ENCODE measurements at regions of chr5 and their contacts with region 1.

Region 1: GRCh38 chr5:88883059-88883835 is at the start of gene MEF2C:
- DNase-seq: peak; percentile 96
- H3K4me3 ChIP-seq: peak within 1 kb of the TSS; percentile 79 to 100 (median 100)
- H3K27ac ChIP-seq: peak within 1 kb of the TSS; percentile 95
- H3K4me1 ChIP-seq: peaks cover 31% of the 10 kb centered on the region
- H3K27me3 ChIP-seq: no peaks in the 10 kb centered on the region
- CTCF ChIP-seq: no peak
- POLR2A ChIP-seq: peak; percentile 70
- total RNA-seq, gene MEF2C: 58.3 and 67.7 TPM in 2 replicates

Region 2: GRCh38 chr5:87412630-87413342 is 1470.5 kb before region 1 on chr5 and contains the start of gene CCNH:
- CTCF ChIA-PET with region 1: no interaction called
- POLR2A ChIA-PET with region 1: no interaction called
- dilution Hi-C with region 1: no loop called
- intact Hi-C with region 1: loop called (anchors 2 kb)
- DNase-seq: peak; percentile 98
- H3K4me3 ChIP-seq: peak within 1 kb of the TSS; percentile 71 to 96 (median 94)
- H3K27ac ChIP-seq: peak within 1 kb of the TSS; percentile 97
- H3K4me1 ChIP-seq: peaks cover 18% of the 10 kb centered on the region
- H3K27me3 ChIP-seq: no peaks in the 10 kb centered on the region
- CTCF ChIP-seq: no peak
- POLR2A ChIP-seq: peak; percentile 89
- total RNA-seq, gene CCNH: 50.6 and 54.1 TPM in 2 replicates

Region 3: GRCh38 chr5:88826646-88827585 is 56.3 kb before region 1 on chr5:
- CTCF ChIA-PET with region 1: interaction called, 10 read pairs
- POLR2A ChIA-PET with region 1: interaction called, 26 read pairs
- dilution Hi-C with region 1: no loop called
- intact Hi-C with region 1: loop called (anchors 1 kb)
- DNase-seq: peak; percentile 99
- H3K4me3 ChIP-seq: peak overlapping the region in 1 of 3 experiments; percentile 37
- H3K27ac ChIP-seq: peak overlapping the region; percentile 94
- H3K4me1 ChIP-seq: peaks cover 64% of the 10 kb centered on the region
- H3K27me3 ChIP-seq: no peaks in the 10 kb centered on the region
- CTCF ChIP-seq: no peak
- POLR2A ChIP-seq: peak; percentile 73

Region 4: DNA sequence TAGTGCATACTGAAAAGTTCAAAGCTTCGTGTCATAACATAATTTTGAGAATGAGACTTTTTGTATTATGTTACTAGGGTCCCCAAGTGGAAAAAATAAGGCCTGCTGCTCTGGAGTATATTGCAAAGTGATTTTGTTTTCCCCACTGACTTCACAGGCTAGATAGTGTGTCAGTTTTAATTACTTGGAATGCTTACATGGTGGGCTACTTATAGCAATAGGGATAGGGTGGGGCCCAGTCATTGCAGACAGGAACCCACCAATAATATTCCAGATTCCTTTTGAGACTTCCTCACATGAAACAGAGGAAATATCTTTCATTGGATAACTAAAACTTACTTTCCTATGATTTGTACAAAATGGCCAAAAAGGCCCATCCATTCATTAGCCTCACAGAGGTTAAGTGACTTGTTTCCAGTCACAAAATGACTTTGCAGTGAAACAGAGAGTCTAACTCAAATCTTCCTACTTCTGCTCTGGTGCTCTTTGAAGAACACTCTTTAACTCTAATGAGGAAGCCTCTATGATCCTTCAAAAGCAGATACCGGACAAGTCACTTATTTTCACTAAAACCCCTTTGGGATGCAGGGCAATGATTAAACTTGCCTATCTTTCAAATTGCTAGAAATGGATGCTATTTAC is 16.0 kb after region 1 on chr5:
- CTCF ChIA-PET with region 1: no interaction called
- POLR2A ChIA-PET with region 1: no interaction called
- dilution Hi-C with region 1: no loop called
- intact Hi-C with region 1: no loop called
- DNase-seq: no peak
- H3K4me3 ChIP-seq: no peak overlapping the region
- H3K27ac ChIP-seq: no peak overlapping the region
- H3K4me1 ChIP-seq: no peaks in the 10 kb centered on the region
- H3K27me3 ChIP-seq: no peaks in the 10 kb centered on the region
- CTCF ChIP-seq: no peak
- POLR2A ChIP-seq: no peak

Region 5: DNA sequence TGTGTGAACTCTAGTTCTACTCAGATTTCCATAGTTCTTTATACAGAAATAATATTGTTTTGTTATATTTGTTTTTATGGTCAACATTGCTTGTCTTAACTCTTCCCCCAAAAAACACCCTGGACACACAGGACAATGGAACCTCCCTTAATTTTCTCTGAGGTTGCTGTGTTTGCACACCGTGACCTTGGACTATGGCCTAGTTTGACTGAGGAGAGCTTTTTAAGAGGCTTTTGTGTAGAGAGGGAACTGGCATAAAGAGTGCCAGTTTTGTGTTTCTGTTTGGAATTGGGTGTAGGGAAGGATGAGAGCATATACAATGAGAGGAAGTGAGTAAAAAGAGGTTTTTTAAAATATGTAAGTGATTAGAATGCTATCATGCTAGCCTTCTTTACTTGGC is 100.8 kb after region 1 on chr5:
- CTCF ChIA-PET with region 1: no interaction called
- POLR2A ChIA-PET with region 1: no interaction called
- dilution Hi-C with region 1: no loop called
- intact Hi-C with region 1: no loop called
- DNase-seq: no peak
- H3K4me3 ChIP-seq: no peak overlapping the region
- H3K27ac ChIP-seq: no peak overlapping the region
- H3K4me1 ChIP-seq: no peaks in the 10 kb centered on the region
- H3K27me3 ChIP-seq: no peaks in the 10 kb centered on the region
- CTCF ChIP-seq: no peak
- POLR2A ChIP-seq: no peak

Region 6: DNA sequence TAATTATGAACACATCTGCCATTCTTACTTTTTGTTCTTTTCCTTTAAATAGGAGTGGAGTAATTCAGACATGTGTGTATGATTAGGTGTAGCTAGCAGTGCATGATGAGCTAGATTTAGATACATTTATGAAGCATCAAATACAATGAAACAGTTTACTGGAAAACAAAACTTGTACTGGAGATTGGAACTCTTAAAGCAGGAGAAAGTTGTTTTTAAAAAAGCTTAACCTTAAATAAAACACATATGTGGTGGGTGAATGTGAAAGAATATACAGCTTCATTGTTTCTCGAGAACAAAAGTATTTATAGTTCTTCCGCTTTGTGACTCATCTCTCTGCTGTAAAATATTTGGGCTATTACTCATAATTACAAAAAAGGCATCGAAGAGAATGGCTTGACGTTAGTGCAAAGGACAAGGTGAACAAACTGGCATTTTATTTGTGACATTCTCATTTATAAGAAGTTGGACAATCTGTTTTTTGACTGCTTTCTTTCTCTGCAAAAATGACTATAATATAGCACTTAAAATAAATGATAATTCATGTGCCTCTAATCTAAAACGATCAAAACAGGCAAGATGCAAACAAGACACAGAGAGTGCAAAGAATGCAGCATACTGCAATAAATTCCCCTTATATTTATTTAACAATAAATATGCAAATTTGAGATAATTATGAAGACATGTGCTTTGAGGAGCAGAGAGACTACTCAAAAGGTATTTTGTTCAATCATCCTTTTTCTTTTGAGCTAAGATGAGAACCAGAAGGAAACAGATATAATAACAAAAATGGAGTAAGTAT is 1047.5 kb after region 1 on chr5:
- CTCF ChIA-PET with region 1: no interaction called
- POLR2A ChIA-PET with region 1: interaction called, 6 read pairs
- dilution Hi-C with region 1: no loop called
- intact Hi-C with region 1: loop called (anchors 2 kb)
- DNase-seq: peak; percentile 88
- H3K4me3 ChIP-seq: peak overlapping the region in 1 of 3 experiments; percentile 21
- H3K27ac ChIP-seq: peak overlapping the region; percentile 97
- H3K4me1 ChIP-seq: peaks cover 29% of the 10 kb centered on the region
- H3K27me3 ChIP-seq: no peaks in the 10 kb centered on the region
- CTCF ChIP-seq: no peak
- POLR2A ChIP-seq: no peak

Region 7: DNA sequence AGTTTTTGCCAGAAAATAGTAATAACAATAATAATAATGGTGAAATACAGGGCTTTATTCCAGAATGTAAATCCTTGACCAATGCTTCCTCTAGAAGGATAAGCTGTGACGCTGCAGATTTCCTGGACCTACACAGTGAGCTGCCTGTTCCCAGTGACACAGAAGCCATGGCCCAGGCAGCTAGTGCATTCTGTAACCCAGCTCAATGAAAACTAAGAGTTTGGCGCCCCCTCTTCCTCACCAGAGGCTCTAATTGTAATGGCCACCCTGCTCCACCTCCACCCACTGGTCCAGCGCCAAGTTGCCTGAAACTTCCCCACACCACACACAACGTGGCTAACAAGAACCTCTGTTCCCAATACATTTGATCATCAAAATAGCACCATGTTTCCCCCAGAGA is 1278.2 kb after region 1 on chr5:
- CTCF ChIA-PET with region 1: interaction called, 11 read pairs
- POLR2A ChIA-PET with region 1: no interaction called
- dilution Hi-C with region 1: no loop called
- intact Hi-C with region 1: no loop called
- DNase-seq: peak; percentile 76
- H3K4me3 ChIP-seq: no peak overlapping the region
- H3K27ac ChIP-seq: no peak overlapping the region
- H3K4me1 ChIP-seq: no peaks in the 10 kb centered on the region
- H3K27me3 ChIP-seq: no peaks in the 10 kb centered on the region
- CTCF ChIP-seq: peak; percentile 40 to 58
- POLR2A ChIP-seq: no peak

Region 8: GRCh38 chr5:90264689-90265544 is 1381.7 kb after region 1 on chr5:
- CTCF ChIA-PET with region 1: interaction called, 5 read pairs
- POLR2A ChIA-PET with region 1: no interaction called
- dilution Hi-C with region 1: no loop called
- intact Hi-C with region 1: loop called (anchors 1 kb)
- DNase-seq: peak; percentile 72
- H3K4me3 ChIP-seq: no peak overlapping the region
- H3K27ac ChIP-seq: no peak overlapping the region
- H3K4me1 ChIP-seq: no peaks in the 10 kb centered on the region
- H3K27me3 ChIP-seq: no peaks in the 10 kb centered on the region
- CTCF ChIP-seq: peak; percentile 84 to 90
- POLR2A ChIP-seq: no peak